ENCODE measurements at regions of chrX and their contacts with region 1.

Region 1: GRCh38 chrX:122203399-122203798 is 980.7 kb upstream of the GRIA3 start:
- DNase-seq: no peak
- ATAC-seq: no peak
- H3K4me3 ChIP-seq: no peak overlapping the region
- H3K27ac ChIP-seq: no peak overlapping the region
- H3K4me1 ChIP-seq: no peaks in the 10 kb centered on the region
- H3K27me3 ChIP-seq: no peaks in the 10 kb centered on the region
- CTCF ChIP-seq: no peak
- EP300 ChIP-seq: no peak
- POLR2A ChIP-seq: no peak
- RAD21 ChIP-seq: no peak

Region 2: GRCh38 chrX:121761845-121762244 is 441.6 kb before region 1 on chrX:
- CTCF ChIA-PET with region 1: no interaction called
- POLR2A ChIA-PET with region 1: no interaction called
- in situ Hi-C with region 1: no loop called
- intact Hi-C with region 1: loop called (anchors 10 kb)
- DNase-seq: no peak
- ATAC-seq: no peak
- H3K4me3 ChIP-seq: no peak overlapping the region
- H3K27ac ChIP-seq: no peak overlapping the region
- H3K4me1 ChIP-seq: no peaks in the 10 kb centered on the region
- H3K27me3 ChIP-seq: no peaks in the 10 kb centered on the region
- CTCF ChIP-seq: no peak
- EP300 ChIP-seq: no peak
- POLR2A ChIP-seq: no peak
- RAD21 ChIP-seq: no peak

Measured in HepG2 (cell line).